Endothelial cell of umbilical vein (primary cell): ENCODE measurements at regions of chr15 and their contacts with region 1.

Region 1: DNA sequence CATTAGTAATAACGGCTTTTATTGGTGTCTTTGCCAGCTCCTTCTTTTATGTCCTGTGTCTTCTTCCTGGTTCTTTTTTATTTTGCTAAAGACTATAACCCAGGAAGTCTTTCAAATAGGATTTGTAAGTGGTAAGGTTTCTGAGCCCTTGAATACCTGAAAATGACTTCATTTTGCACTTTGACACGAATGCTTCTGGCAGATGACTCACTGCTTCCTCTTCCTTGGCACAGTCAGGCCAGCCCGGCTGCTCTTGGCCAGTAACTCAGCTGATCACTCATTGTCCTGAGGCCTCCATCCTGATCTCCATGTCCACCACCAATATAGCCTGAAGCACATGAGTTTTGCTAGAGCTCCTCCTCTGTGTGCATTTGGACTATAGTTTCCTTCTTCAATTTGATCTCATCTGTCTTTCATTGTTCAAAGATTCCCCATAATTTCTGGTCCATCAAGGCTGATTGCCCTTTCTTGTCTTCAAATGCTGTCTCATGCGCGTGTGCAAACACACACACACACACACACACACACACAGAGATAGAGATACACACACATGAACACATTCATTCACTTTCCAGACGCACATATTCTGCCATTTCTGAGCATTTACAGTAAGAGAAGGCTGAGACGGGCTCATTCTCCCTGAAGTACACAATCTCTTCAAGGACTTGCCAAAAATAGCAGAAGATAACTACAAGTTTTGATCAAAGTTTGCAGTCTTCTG is 48.5 kb upstream of the NR2E3 start:
- DNase-seq: peak; percentile 84
- H3K4me3 ChIP-seq: no peak overlapping the region
- H3K27ac ChIP-seq: peak overlapping the region; percentile 69
- H3K4me1 ChIP-seq: peaks cover 9% of the 10 kb centered on the region
- H3K27me3 ChIP-seq: no peaks in the 10 kb centered on the region
- CTCF ChIP-seq: no peak
- POLR2A ChIP-seq: no peak

Region 2: GRCh38 chr15:71780115-71780976 is 18.5 kb after region 1 on chr15:
- CTCF ChIA-PET with region 1: interaction called, 21 read pairs
- POLR2A ChIA-PET with region 1: no interaction called
- dilution Hi-C with region 1: no loop called
- intact Hi-C with region 1: loop called (anchors 2 kb)
- DNase-seq: peak; percentile 84
- H3K4me3 ChIP-seq: peak overlapping the region in 1 of 3 experiments; percentile 51
- H3K27ac ChIP-seq: peak overlapping the region; percentile 86
- H3K4me1 ChIP-seq: peaks cover 19% of the 10 kb centered on the region
- H3K27me3 ChIP-seq: no peaks in the 10 kb centered on the region
- CTCF ChIP-seq: peak; percentile 76 to 77
- POLR2A ChIP-seq: no peak

Region 3: GRCh38 chr15:71792521-71792920 is 30.7 kb after region 1 on chr15:
- CTCF ChIA-PET with region 1: interaction called, 3 read pairs
- POLR2A ChIA-PET with region 1: no interaction called
- dilution Hi-C with region 1: no loop called
- intact Hi-C with region 1: loop called (anchors 2 kb)
- DNase-seq: peak; percentile 64
- H3K4me3 ChIP-seq: no peak overlapping the region
- H3K27ac ChIP-seq: peak overlapping the region; percentile 74
- H3K4me1 ChIP-seq: peaks cover 45% of the 10 kb centered on the region
- H3K27me3 ChIP-seq: no peaks in the 10 kb centered on the region
- CTCF ChIP-seq: no peak
- POLR2A ChIP-seq: no peak